GM23248 (cell line): ENCODE measurements at regions of chr22 and their contacts with region 1.

Region 1: GRCh38 chr22:35582861-35583670 is 34.1 kb downstream of the MB start:
- DNase-seq: peak; percentile 70
- H3K4me3 ChIP-seq: no peak overlapping the region
- H3K27ac ChIP-seq: no peak overlapping the region
- H3K4me1 ChIP-seq: no peaks in the 10 kb centered on the region
- H3K27me3 ChIP-seq: no peaks in the 10 kb centered on the region

Region 2: DNA sequence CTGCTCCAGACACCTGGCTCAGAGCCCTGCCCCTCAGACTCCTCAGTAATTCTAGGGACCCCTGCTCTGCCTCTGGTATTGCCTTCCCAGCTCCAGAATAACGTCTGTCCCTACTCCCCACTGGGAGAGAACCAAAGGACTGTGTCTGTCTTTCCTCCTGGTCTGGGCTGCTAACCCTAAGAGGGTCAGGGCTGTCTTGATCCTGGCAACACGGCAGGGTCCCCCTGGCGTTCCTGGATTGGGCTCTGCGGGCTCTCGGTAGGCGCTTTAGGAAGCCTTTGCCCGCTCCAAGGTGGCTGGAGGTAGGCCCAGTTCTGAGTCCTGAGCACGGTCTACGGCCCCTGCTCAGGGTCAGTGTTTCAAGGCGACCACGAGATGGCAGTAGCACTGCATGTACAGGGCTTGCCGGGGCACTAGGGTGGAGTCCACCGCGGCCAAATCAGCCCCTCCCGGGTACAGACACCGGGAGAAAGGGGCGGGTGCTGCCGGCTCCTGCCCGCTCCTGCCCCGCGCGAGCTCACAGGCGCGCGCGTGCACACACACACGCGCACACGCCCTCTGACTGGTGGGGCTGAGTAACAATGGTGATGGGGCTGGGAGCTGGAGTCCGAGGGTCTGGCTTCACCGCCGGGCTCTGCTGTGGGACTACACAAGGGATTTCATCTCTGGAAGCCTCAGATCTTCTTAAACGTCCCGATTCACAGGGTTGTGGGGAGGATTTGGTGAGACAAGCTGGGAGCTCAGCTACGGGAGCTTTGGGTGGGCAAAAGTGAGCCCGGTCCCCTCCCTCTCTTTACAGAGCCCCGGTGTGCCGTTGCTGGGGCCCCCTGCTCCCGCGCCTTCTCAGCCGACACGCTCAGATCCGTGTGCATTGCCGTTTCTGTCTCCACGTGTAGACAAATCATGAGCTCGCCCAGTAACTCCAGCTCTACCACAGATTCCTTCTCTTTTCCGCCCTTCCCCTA is 232.2 kb before region 1 on chr22:
- in situ Hi-C with region 1: loop called (anchors 10 kb)
- DNase-seq: peak; percentile 97
- H3K4me3 ChIP-seq: peak overlapping the region; percentile 72
- H3K27ac ChIP-seq: peak overlapping the region; percentile 66
- H3K4me1 ChIP-seq: peaks cover 15% of the 10 kb centered on the region
- H3K27me3 ChIP-seq: no peaks in the 10 kb centered on the region

Region 3: DNA sequence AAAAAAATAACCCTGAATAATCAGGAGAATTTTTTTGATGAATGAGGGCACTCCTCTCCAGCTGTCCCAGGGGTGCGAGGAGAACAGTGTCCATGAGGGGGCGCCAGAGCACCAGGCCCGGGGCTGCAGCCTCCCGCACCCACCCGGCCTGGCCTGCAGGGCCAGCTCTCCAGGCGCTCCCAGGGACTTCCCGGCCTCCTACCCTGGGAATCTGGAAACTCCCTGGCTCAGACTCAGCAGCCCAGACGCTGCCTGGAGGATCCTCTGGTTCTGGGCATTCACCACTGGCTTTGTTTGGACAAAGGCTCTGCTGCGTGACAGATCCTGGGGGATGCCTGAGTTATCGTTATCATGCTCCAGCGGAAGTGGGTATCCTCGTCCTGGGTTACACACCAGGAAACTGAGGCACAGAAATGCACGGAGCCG is 152.2 kb before region 1 on chr22:
- in situ Hi-C with region 1: loop called (anchors 5 kb)
- DNase-seq: peak; percentile 96
- H3K4me3 ChIP-seq: no peak overlapping the region
- H3K27ac ChIP-seq: peak overlapping the region; percentile 41; the same call in 1 of the 2 replicates
- H3K4me1 ChIP-seq: peaks cover 21% of the 10 kb centered on the region
- H3K27me3 ChIP-seq: no peaks in the 10 kb centered on the region